H1 (cell line): ENCODE measurements at regions of chr13 and their contacts with region 1.

Region 1: DNA sequence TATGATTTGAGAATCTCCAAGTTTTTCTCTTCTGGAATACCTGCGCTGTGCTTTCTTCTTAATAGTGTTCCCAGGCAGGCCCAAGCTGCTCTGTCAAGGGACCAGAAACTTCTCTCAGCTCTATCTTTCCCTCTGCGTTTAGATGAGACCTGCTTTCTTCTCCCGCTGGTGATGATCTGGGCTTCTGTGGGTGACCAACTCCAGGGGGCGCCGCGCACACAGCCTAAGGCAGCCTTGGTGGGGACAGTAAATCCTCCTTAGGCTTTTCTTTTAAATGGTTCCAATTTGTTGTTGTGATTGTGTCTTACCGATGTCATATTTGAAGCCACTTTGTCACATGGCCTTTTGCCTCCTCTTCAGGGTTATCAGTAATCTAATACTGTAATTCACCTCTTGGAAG is 439.4 kb upstream of the KLF12 start:
- DNase-seq: peak in 1 of 2 experiments; percentile 68
- H3K4me3 ChIP-seq: no peak overlapping the region
- H3K27ac ChIP-seq: no peak overlapping the region
- H3K4me1 ChIP-seq: peaks cover 0 to 6% (median 1%) of the 10 kb centered on the region in 4 experiments; a peak in 2 of 7 replicates
- H3K27me3 ChIP-seq: peaks cover 0 to 9% (median 2%) of the 10 kb centered on the region in 4 experiments; a peak in 5 of 7 replicates
- CTCF ChIP-seq: peak; percentile 71 to 75 (median 74)
- EP300 ChIP-seq: no peak
- POLR2A ChIP-seq: no peak
- RAD21 ChIP-seq: peak; percentile 87 to 89

Region 2: GRCh38 chr13:74316547-74316946 is 257.1 kb before region 1 on chr13:
- CTCF ChIA-PET with region 1: no interaction called
- POLR2A ChIA-PET with region 1: no interaction called
- DNase-seq: no peak
- H3K4me3 ChIP-seq: no peak overlapping the region
- H3K27ac ChIP-seq: no peak overlapping the region
- H3K4me1 ChIP-seq: no peaks in the 10 kb centered on the region
- H3K27me3 ChIP-seq: no peaks in the 10 kb centered on the region
- CTCF ChIP-seq: no peak
- EP300 ChIP-seq: no peak
- POLR2A ChIP-seq: no peak
- RAD21 ChIP-seq: no peak

Region 3: DNA sequence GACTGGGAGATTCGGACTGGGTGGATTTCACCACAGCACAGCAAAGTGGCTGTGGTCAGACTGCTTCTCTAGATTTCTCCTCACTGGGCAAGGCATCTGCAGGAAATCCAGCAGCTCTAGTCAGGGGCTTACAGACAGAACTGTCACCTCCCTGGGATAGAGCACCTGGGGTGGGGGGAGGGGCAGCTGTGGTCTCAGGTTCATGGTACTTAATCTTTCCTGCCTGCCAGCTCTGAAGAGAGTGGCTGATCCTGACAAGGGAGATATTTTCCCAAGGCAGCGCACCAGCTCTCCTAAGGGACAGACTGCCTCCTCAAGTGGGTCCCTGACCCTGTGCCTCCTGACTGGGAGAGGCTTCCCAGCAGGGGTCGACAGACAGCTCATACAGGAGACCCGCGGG is 226.7 kb before region 1 on chr13:
- CTCF ChIA-PET with region 1: no interaction called
- POLR2A ChIA-PET with region 1: no interaction called
- DNase-seq: no peak
- H3K4me3 ChIP-seq: no peak overlapping the region
- H3K27ac ChIP-seq: no peak overlapping the region
- H3K4me1 ChIP-seq: peaks cover 0 to 2% (median 0%) of the 10 kb centered on the region in 4 experiments; a peak in 1 of 7 replicates
- H3K27me3 ChIP-seq: no peaks in the 10 kb centered on the region
- CTCF ChIP-seq: no peak
- EP300 ChIP-seq: no peak
- POLR2A ChIP-seq: no peak
- RAD21 ChIP-seq: no peak

Region 4: DNA sequence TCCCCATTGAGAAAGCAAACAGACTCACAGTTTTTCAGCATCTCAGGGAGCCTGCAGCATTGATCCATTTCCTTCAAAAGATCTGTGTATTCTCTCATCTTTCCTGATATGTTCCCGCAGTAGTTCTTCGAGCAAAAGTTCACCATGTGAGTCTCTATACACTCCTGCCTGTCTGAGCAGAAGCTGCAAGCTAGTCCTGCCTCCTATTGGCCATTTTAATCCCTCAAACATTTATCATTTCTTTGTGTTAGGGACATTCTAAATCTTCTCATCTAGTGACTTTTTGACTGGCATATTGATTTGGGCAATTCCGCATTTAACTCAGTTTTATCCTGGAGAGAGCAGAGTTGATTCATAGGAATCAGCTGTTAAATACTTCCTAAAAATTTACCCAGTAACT is 220.9 kb after region 1 on chr13:
- CTCF ChIA-PET with region 1: interaction called, 10 read pairs
- POLR2A ChIA-PET with region 1: no interaction called
- DNase-seq: no peak
- H3K4me3 ChIP-seq: no peak overlapping the region
- H3K27ac ChIP-seq: no peak overlapping the region
- H3K4me1 ChIP-seq: no peaks in the 10 kb centered on the region
- H3K27me3 ChIP-seq: no peaks in the 10 kb centered on the region
- CTCF ChIP-seq: peak in 1 of 3 experiments; percentile 27; a peak in 2 of 4 replicates
- EP300 ChIP-seq: no peak
- POLR2A ChIP-seq: no peak
- RAD21 ChIP-seq: peak; percentile 55 to 59

Region 5: GRCh38 chr13:75258159-75258782 is 684.6 kb after region 1 on chr13:
- CTCF ChIA-PET with region 1: interaction called, 13 read pairs
- POLR2A ChIA-PET with region 1: no interaction called
- DNase-seq: no peak
- H3K4me3 ChIP-seq: no peak overlapping the region
- H3K27ac ChIP-seq: no peak overlapping the region
- H3K4me1 ChIP-seq: no peaks in the 10 kb centered on the region
- H3K27me3 ChIP-seq: no peaks in the 10 kb centered on the region; a peak in 1 of 7 replicates
- CTCF ChIP-seq: peak in 2 of 3 experiments; percentile 45 to 56; a peak in 2 of 4 replicates
- EP300 ChIP-seq: no peak
- POLR2A ChIP-seq: no peak
- RAD21 ChIP-seq: peak; percentile 75 to 85